ENCODE measurements at regions of chr1 and their contacts with region 1.

Region 1: GRCh38 chr1:44631647-44632539 is 42.4 kb downstream of the TMEM53 start:
- DNase-seq: peak; percentile 95 to 96 (median 96)
- ATAC-seq: peak; percentile 87
- H3K4me3 ChIP-seq: peak overlapping the region; percentile 78
- H3K27ac ChIP-seq: peak overlapping the region; percentile 90
- H3K4me1 ChIP-seq: peaks cover 49 to 60% of the 10 kb centered on the region in 2 experiments; a peak in 4 of 5 replicates
- H3K27me3 ChIP-seq: no peaks in the 10 kb centered on the region
- CTCF ChIP-seq: 0 out of 6 replicates have a peak, but pooled peaks of 1 of the 3 experiments have one; percentile 3
- EP300 ChIP-seq: no peak; the same call in 1 of the 2 replicates
- POLR2A ChIP-seq: peak; percentile 89
- RAD21 ChIP-seq: no peak

Region 2: GRCh38 chr1:44609412-44609767 is 22.5 kb before region 1 on chr1:
- CTCF ChIA-PET with region 1: no interaction called
- POLR2A ChIA-PET with region 1: interaction called, 122 read pairs
- in situ Hi-C with region 1: no loop called
- intact Hi-C with region 1: no loop called
- DNase-seq: peak; percentile 80 to 87 (median 84)
- ATAC-seq: peak; percentile 92
- H3K4me3 ChIP-seq: no peak overlapping the region
- H3K27ac ChIP-seq: no peak overlapping the region
- H3K4me1 ChIP-seq: peaks cover 21 to 26% of the 10 kb centered on the region in 2 experiments
- H3K27me3 ChIP-seq: peaks cover 0 to 5% of the 10 kb centered on the region in 2 experiments; a peak in 3 of 5 replicates
- CTCF ChIP-seq: peak; percentile 89 to 90 (median 90)
- EP300 ChIP-seq: no peak
- POLR2A ChIP-seq: no peak
- RAD21 ChIP-seq: peak; percentile 87 to 96

Region 3: DNA sequence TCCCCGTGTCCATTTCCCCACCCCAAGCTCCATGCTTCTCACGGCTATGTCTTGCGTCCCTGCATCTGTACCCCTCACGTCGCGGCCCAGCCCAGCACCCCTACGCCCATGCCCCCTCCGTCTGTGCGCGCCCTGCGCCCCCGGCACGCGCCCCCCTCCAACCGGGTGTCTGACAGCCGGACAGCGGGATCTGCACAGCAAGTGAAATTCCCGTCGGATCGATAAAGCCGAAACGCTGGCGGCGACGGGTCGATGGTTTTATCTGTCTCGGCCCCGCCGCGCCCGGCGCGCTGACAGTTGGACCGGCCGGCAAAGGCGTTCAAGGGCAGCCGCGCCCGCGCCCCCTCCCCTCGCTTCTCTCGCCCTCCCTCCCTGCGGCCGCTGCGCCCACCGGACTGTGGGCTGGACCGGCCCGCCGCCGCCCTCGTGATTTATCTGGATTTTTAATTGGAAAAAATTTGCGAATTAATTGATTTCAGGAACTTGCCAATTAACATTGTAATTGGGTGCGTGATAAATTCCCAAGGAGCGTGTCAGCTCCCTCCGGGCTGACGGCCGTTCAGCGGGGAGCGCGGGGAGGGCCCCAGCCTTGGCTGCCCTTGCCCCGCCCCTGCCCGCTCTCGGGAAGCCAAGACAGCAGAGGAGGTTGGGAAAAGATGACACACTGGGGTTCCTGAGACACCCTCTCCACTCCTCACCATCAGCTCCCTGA is 14.7 kb before region 1 on chr1:
- CTCF ChIA-PET with region 1: no interaction called
- POLR2A ChIA-PET with region 1: interaction called, 122 read pairs
- in situ Hi-C with region 1: no loop called
- intact Hi-C with region 1: no loop called
- DNase-seq: peak in 2 of 4 experiments; percentile 57 to 60
- ATAC-seq: peak; percentile 27; the same call in 1 of the 3 replicates
- H3K4me3 ChIP-seq: no peak overlapping the region
- H3K27ac ChIP-seq: no peak overlapping the region
- H3K4me1 ChIP-seq: peaks cover 11 to 22% of the 10 kb centered on the region in 2 experiments; a peak in 3 of 5 replicates
- H3K27me3 ChIP-seq: no peaks in the 10 kb centered on the region
- CTCF ChIP-seq: no peak
- EP300 ChIP-seq: no peak
- POLR2A ChIP-seq: no peak
- RAD21 ChIP-seq: no peak

Region 4: GRCh38 chr1:44674113-44675000 is 42.5 kb after region 1 on chr1 and contains the starts of genes ARMH1 and TMEM53:
- CTCF ChIA-PET with region 1: no interaction called
- POLR2A ChIA-PET with region 1: interaction called, 10 read pairs
- in situ Hi-C with region 1: no loop called
- intact Hi-C with region 1: no loop called
- DNase-seq: peak; percentile 99 to 100 (median 100)
- ATAC-seq: peak; percentile 97
- H3K4me3 ChIP-seq: peak within 1 kb of the TSS; percentile 54
- H3K27ac ChIP-seq: peak within 1 kb of the TSS; percentile 77
- H3K4me1 ChIP-seq: peaks cover 23 to 37% of the 10 kb centered on the region in 2 experiments
- H3K27me3 ChIP-seq: no peaks in the 10 kb centered on the region; a peak in 1 of 5 replicates
- CTCF ChIP-seq: no peak
- EP300 ChIP-seq: peak; percentile 41; the same call in 1 of the 2 replicates
- POLR2A ChIP-seq: peak; percentile 87
- RAD21 ChIP-seq: no peak
- polyA plus RNA-seq, gene ARMH1: not detected
- polyA plus RNA-seq, gene TMEM53: 0.23 to 1.9 TPM

Region 5: GRCh38 chr1:44799770-44800584 is 168.1 kb after region 1 on chr1 and contains the start of gene PLK3:
- CTCF ChIA-PET with region 1: no interaction called
- POLR2A ChIA-PET with region 1: no interaction called
- in situ Hi-C with region 1: no loop called
- intact Hi-C with region 1: loop called (anchors 10 kb)
- DNase-seq: peak; percentile 92 to 99 (median 96)
- ATAC-seq: peak; percentile 93
- H3K4me3 ChIP-seq: peak within 1 kb of the TSS; percentile 77
- H3K27ac ChIP-seq: peak within 1 kb of the TSS; percentile 69
- H3K4me1 ChIP-seq: peaks cover 23 to 53% of the 10 kb centered on the region in 2 experiments
- H3K27me3 ChIP-seq: no peaks in the 10 kb centered on the region; a peak in 1 of 5 replicates
- CTCF ChIP-seq: peak; percentile 94 to 96 (median 95)
- EP300 ChIP-seq: no peak; the same call in 1 of the 2 replicates
- POLR2A ChIP-seq: peak; percentile 91
- RAD21 ChIP-seq: peak; percentile 91 to 96
- polyA plus RNA-seq, gene PLK3: 0.52 to 1.9 TPM

Region 6: GRCh38 chr1:44826375-44827196 is 194.7 kb after region 1 on chr1:
- CTCF ChIA-PET with region 1: no interaction called
- POLR2A ChIA-PET with region 1: no interaction called
- in situ Hi-C with region 1: no loop called
- intact Hi-C with region 1: no loop called
- DNase-seq: peak; percentile 38 to 59 (median 50)
- ATAC-seq: peak; percentile 38
- H3K4me3 ChIP-seq: no peak overlapping the region
- H3K27ac ChIP-seq: no peak overlapping the region
- H3K4me1 ChIP-seq: peaks cover 21 to 64% of the 10 kb centered on the region in 2 experiments
- H3K27me3 ChIP-seq: no peaks in the 10 kb centered on the region
- CTCF ChIP-seq: 0 out of 6 replicates have a peak, but pooled peaks of 1 of the 3 experiments have one; percentile 6
- EP300 ChIP-seq: no peak
- POLR2A ChIP-seq: no peak
- RAD21 ChIP-seq: no peak

Measured in K562 (cell line).